ENCODE measurements at regions of chr11 and their contacts with region 1.

Region 1: GRCh38 chr11:119018074-119018938 is at the starts of genes RPS25 and TRAPPC4:
- DNase-seq: peak; percentile 97
- H3K4me3 ChIP-seq: peak within 1 kb of the TSS; percentile 79 to 98 (median 95)
- H3K27ac ChIP-seq: peak within 1 kb of the TSS; percentile 60
- H3K4me1 ChIP-seq: peaks cover 18% of the 10 kb centered on the region
- H3K27me3 ChIP-seq: no peaks in the 10 kb centered on the region
- CTCF ChIP-seq: no peak
- POLR2A ChIP-seq: peak; percentile 92
- total RNA-seq, gene RPS25: 992 and 1,027 TPM in 2 replicates
- total RNA-seq, gene TRAPPC4: 64.2 and 79.3 TPM in 2 replicates

Region 2: GRCh38 chr11:118928108-118928870 is 90.0 kb before region 1 on chr11:
- CTCF ChIA-PET with region 1: interaction called, 4 read pairs
- POLR2A ChIA-PET with region 1: no interaction called
- dilution Hi-C with region 1: no loop called
- intact Hi-C with region 1: loop called (anchors 5 kb)
- DNase-seq: peak; percentile 91
- H3K4me3 ChIP-seq: peak overlapping the region; percentile 34 to 77 (median 64)
- H3K27ac ChIP-seq: peak overlapping the region; percentile 27
- H3K4me1 ChIP-seq: peaks cover 21% of the 10 kb centered on the region
- H3K27me3 ChIP-seq: peaks cover 0 to 2% of the 10 kb centered on the region in 2 experiments
- CTCF ChIP-seq: peak; percentile 89 to 92
- POLR2A ChIP-seq: no peak

Region 3: GRCh38 chr11:118997627-118998387 is 20.5 kb before region 1 on chr11 and contains the start of gene CENATAC:
- CTCF ChIA-PET with region 1: interaction called, 4 read pairs
- POLR2A ChIA-PET with region 1: interaction called, 6 read pairs
- dilution Hi-C with region 1: no loop called
- intact Hi-C with region 1: loop called (anchors 1 kb)
- DNase-seq: peak; percentile 92
- H3K4me3 ChIP-seq: peak within 1 kb of the TSS; percentile 61 to 81 (median 62)
- H3K27ac ChIP-seq: peak within 1 kb of the TSS; percentile 26
- H3K4me1 ChIP-seq: peaks cover 18% of the 10 kb centered on the region
- H3K27me3 ChIP-seq: no peaks in the 10 kb centered on the region
- CTCF ChIP-seq: no peak
- POLR2A ChIP-seq: peak; percentile 93
- total RNA-seq, gene CENATAC: 39.0 and 41.8 TPM in 2 replicates

Region 4: GRCh38 chr11:119030329-119031049 is 12.2 kb after region 1 on chr11 and contains the start of gene SLC37A4:
- CTCF ChIA-PET with region 1: interaction called, 11 read pairs
- POLR2A ChIA-PET with region 1: interaction called, 3 read pairs
- dilution Hi-C with region 1: no loop called
- intact Hi-C with region 1: loop called (anchors 1 kb)
- DNase-seq: peak; percentile 98
- H3K4me3 ChIP-seq: peak within 1 kb of the TSS; percentile 55 to 86 (median 60)
- H3K27ac ChIP-seq: no peak within 1 kb of the TSS
- H3K4me1 ChIP-seq: peaks cover 5% of the 10 kb centered on the region
- H3K27me3 ChIP-seq: no peaks in the 10 kb centered on the region
- CTCF ChIP-seq: peak in 1 of 2 donors; percentile 93
- POLR2A ChIP-seq: peak; percentile 65
- total RNA-seq, gene SLC37A4: 19.9 and 21.5 TPM in 2 replicates

Region 5: GRCh38 chr11:119095066-119095880 is 77.0 kb after region 1 on chr11:
- CTCF ChIA-PET with region 1: no interaction called
- POLR2A ChIA-PET with region 1: no interaction called
- dilution Hi-C with region 1: no loop called
- intact Hi-C with region 1: loop called (anchors 2 kb)
- DNase-seq: peak; percentile 100
- H3K4me3 ChIP-seq: peak overlapping the region; percentile 70 to 95 (median 90)
- H3K27ac ChIP-seq: peak overlapping the region; percentile 59
- H3K4me1 ChIP-seq: peaks cover 27% of the 10 kb centered on the region
- H3K27me3 ChIP-seq: no peaks in the 10 kb centered on the region
- CTCF ChIP-seq: peak in 1 of 2 donors; percentile 1
- POLR2A ChIP-seq: peak; percentile 100